Thyroid gland (tissue), 4 donors: ENCODE measurements at regions of chr14 and their contacts with region 1.

Region 1: DNA sequence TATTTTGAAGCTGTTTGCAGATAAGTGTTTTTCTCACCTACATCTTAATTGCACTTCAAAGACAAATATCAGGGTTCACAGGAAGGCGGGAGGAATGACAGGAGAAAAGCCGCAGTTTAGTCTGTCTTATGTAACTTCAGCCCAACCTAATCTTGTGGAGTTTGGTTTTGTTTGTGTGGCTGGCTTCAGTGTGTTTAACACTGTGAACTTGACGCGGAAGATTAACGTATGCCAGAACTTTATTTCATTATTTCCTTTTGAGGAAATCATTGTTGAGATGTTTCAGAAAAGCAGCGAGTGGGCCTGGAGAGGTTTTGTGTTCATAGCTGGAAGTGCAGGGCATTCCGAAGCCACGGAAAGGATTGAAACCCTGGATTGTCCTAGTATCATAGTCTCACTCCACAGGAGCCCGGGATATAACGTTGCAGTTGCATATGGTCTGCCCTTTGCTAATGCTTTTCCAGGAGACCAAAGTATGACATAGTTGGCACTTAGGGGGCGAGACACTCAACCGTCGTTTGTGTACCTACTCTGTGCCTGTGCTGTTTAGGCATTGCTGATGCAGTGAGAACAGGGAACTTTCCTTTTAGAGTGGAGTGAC is 2.0 kb downstream of the PELI2 start:
- DNase-seq: peak; percentile 30 to 46
- H3K4me3 ChIP-seq: peak overlapping the region; percentile 32 to 87 (median 73)
- H3K27ac ChIP-seq: peak overlapping the region; percentile 44 to 91 (median 84)
- H3K4me1 ChIP-seq: peaks cover 15 to 16% of the 10 kb centered on the region in 2 donors
- H3K27me3 ChIP-seq: no peaks in the 10 kb centered on the region
- CTCF ChIP-seq: peak in 1 of 6 experiments; percentile 17
- POLR2A ChIP-seq: peak in 1 of 2 donors; percentile 26

Region 2: DNA sequence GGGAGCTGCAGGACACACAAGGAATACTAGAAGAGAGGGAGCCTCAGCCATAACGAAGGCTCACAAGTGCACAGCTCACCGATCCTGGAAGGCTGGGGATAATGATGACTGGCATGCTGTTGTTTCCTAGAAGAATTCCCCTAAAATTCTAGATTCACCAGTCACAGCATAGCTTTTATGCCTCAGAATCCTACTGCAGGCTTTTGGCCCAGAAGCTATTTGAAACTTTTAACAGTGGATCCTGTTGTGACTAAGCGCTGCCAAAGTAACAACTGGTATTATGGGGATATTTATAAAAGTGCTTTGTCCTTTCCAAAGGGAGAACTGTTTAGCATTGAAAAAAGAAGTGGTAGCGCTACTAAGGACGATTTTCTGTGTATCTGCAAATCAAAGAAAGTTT is 216.1 kb before region 1 on chr14:
- intact Hi-C with region 1: no loop called
- DNase-seq: no peak
- H3K4me3 ChIP-seq: no peak overlapping the region
- H3K27ac ChIP-seq: no peak overlapping the region
- H3K4me1 ChIP-seq: no peaks in the 10 kb centered on the region
- H3K27me3 ChIP-seq: no peaks in the 10 kb centered on the region
- CTCF ChIP-seq: no peak
- POLR2A ChIP-seq: no peak

Region 3: DNA sequence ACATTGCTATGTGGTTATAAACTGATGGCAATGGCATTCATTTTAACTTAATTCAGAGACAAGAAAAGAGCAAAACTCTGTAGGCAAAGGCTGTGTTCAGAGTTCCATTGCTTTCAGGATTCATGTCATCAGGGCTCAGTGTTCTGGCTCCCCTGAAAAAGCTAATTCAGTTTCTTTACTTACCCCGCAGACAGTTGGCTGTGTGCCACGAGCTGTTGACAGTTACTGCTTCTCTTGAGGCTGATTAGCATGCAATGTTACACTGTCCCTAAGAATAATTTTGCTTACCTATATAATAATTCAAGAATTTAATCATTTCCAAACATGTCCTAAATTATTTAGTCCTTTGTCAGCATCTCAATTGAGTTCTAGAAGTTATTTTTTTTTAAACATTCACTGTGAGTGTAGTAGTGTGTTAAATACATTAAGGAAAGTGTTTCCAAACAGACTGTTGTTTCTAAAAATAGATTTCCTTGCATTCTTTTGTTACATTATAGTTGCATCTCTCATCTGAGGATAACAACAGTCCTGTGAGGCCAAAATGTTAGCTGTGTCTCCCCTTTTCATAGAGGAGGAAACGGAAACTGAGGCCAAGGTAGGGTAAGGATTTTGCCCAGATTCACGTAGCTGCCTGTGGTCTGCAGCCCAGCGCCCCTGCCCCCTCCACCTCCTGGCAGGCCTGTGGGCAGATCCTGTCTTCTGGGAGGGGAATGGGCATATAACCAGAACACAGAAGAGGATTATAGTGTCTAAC is 96.6 kb after region 1 on chr14:
- intact Hi-C with region 1: loop called (anchors 10 kb)
- DNase-seq: peak; percentile 56 to 63
- H3K4me3 ChIP-seq: no peak overlapping the region
- H3K27ac ChIP-seq: no peak overlapping the region
- H3K4me1 ChIP-seq: peaks cover 10 to 17% of the 10 kb centered on the region in 2 donors
- H3K27me3 ChIP-seq: no peaks in the 10 kb centered on the region
- CTCF ChIP-seq: no peak
- POLR2A ChIP-seq: no peak

Region 4: DNA sequence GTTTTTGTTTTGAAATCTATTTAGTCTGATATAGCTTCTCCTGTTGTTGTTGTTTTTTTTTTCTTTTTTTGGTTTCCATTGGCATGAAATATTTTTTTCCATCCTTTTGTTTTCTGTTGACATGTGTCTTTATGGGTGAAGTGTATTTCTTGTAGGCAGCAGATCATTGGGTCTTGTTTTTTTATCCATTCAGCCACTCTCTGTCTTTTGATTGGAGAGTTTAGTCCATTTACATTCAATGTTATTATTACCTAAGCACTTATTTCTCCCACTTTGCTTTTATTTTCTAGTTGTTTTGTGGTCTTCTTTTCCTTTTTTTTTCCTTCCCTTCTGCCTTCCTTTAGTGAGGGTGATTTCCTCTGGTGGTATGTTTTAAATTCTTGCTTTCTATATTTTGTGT is 265.8 kb after region 1 on chr14:
- intact Hi-C with region 1: no loop called
- DNase-seq: no peak
- H3K4me3 ChIP-seq: no peak overlapping the region
- H3K27ac ChIP-seq: no peak overlapping the region
- H3K4me1 ChIP-seq: no peaks in the 10 kb centered on the region
- H3K27me3 ChIP-seq: no peaks in the 10 kb centered on the region
- CTCF ChIP-seq: no peak
- POLR2A ChIP-seq: no peak